ENCODE measurements at regions of chr2 and their contacts with region 1.

Region 1: DNA sequence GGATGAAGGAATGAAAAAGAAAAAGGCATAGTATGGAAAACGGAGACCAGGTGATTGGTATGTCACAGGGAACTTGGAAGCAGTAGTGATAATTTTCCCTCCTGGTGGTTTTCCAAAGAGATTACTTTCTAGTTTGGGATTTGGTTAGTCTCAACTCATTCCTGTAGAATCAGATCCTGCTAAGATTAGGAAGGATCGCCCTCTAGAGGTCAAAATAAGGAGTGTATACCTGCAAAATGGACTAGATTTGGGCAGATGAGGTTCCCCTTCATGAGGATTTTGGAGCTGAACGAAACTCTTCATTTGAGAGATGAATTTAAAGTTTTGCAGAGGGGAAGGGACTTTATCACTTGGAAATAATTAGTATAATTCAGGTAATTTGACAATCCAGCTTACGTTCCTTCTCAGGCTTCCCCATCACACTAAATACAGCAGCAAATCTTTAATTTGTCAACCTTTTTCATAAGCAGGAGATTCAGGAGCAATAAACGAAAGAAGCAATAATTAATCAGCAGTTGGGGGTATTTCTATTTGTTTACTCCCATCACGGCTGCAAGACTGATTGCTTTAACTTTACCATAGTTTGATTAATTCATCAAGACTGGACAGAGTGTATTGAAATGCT is 65.2 kb downstream of the CCDC195 start:
- DNase-seq: peak; percentile 61
- H3K4me3 ChIP-seq: no peak overlapping the region
- H3K27ac ChIP-seq: no peak overlapping the region
- H3K4me1 ChIP-seq: no peaks in the 10 kb centered on the region
- H3K27me3 ChIP-seq: no peaks in the 10 kb centered on the region
- CTCF ChIP-seq: peak; percentile 49 to 60
- POLR2A ChIP-seq: no peak

Region 2: GRCh38 chr2:224392545-224392944 is 258.4 kb before region 1 on chr2:
- CTCF ChIA-PET with region 1: no interaction called
- POLR2A ChIA-PET with region 1: no interaction called
- dilution Hi-C with region 1: no loop called
- intact Hi-C with region 1: no loop called
- DNase-seq: peak; percentile 34
- H3K4me3 ChIP-seq: no peak overlapping the region
- H3K27ac ChIP-seq: no peak overlapping the region
- H3K4me1 ChIP-seq: no peaks in the 10 kb centered on the region
- H3K27me3 ChIP-seq: no peaks in the 10 kb centered on the region
- CTCF ChIP-seq: no peak
- POLR2A ChIP-seq: no peak

Region 3: GRCh38 chr2:224449212-224450147 is 201.4 kb before region 1 on chr2:
- CTCF ChIA-PET with region 1: interaction called, 6 read pairs
- POLR2A ChIA-PET with region 1: no interaction called
- dilution Hi-C with region 1: no loop called
- intact Hi-C with region 1: loop called (anchors 1 kb)
- DNase-seq: peak; percentile 85
- H3K4me3 ChIP-seq: no peak overlapping the region
- H3K27ac ChIP-seq: no peak overlapping the region
- H3K4me1 ChIP-seq: peaks cover 8% of the 10 kb centered on the region
- H3K27me3 ChIP-seq: no peaks in the 10 kb centered on the region
- CTCF ChIP-seq: peak; percentile 52 to 59
- POLR2A ChIP-seq: no peak

Region 4: DNA sequence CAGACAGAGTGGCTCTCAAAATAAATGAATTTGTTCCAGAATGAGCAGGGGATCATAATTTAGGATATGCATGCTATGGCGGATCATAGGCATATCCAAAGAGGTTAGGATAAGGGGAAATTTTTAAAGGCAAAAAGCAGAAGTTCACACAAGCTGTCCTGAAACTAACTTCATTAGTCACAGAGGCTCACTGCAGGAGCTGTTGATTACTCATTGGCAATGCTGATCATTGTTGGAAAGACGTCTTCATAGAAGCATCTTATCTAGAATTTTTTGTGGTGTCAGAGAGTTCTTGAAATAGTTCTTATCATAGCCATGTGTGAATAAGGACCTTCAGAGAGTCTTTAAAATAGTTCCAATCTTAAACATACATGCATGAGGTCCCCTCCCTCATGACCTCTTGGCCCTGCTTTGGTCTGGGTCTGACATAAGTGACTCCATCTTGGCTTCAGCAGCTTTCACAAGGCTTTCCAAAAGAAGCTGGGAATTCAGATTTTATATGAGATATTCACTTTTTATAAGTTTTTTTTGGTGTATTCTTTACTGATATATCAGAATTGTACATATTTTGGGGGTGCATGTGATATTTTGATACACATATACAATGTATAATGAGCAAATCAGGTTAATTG is 72.8 kb after region 1 on chr2:
- CTCF ChIA-PET with region 1: no interaction called
- POLR2A ChIA-PET with region 1: no interaction called
- dilution Hi-C with region 1: no loop called
- intact Hi-C with region 1: no loop called
- DNase-seq: no peak
- H3K4me3 ChIP-seq: no peak overlapping the region
- H3K27ac ChIP-seq: no peak overlapping the region
- H3K4me1 ChIP-seq: no peaks in the 10 kb centered on the region
- H3K27me3 ChIP-seq: no peaks in the 10 kb centered on the region
- CTCF ChIP-seq: no peak
- POLR2A ChIP-seq: no peak

Region 5: GRCh38 chr2:224994242-224994823 is 343.4 kb after region 1 on chr2:
- CTCF ChIA-PET with region 1: no interaction called
- POLR2A ChIA-PET with region 1: no interaction called
- dilution Hi-C with region 1: no loop called
- intact Hi-C with region 1: no loop called
- DNase-seq: no peak
- H3K4me3 ChIP-seq: no peak overlapping the region
- H3K27ac ChIP-seq: no peak overlapping the region
- H3K4me1 ChIP-seq: no peaks in the 10 kb centered on the region
- H3K27me3 ChIP-seq: no peaks in the 10 kb centered on the region
- CTCF ChIP-seq: no peak
- POLR2A ChIP-seq: no peak

Region 6: GRCh38 chr2:225008935-225009334 is 358.0 kb after region 1 on chr2:
- CTCF ChIA-PET with region 1: no interaction called
- POLR2A ChIA-PET with region 1: no interaction called
- dilution Hi-C with region 1: no loop called
- intact Hi-C with region 1: loop called (anchors 1 kb)
- DNase-seq: peak; percentile 39
- H3K4me3 ChIP-seq: no peak overlapping the region
- H3K27ac ChIP-seq: no peak overlapping the region
- H3K4me1 ChIP-seq: peaks cover 13% of the 10 kb centered on the region
- H3K27me3 ChIP-seq: no peaks in the 10 kb centered on the region
- CTCF ChIP-seq: peak; percentile 37 to 63
- POLR2A ChIP-seq: no peak